ENCODE measurements at regions of chr12 and their contacts with region 1.

Region 1: DNA sequence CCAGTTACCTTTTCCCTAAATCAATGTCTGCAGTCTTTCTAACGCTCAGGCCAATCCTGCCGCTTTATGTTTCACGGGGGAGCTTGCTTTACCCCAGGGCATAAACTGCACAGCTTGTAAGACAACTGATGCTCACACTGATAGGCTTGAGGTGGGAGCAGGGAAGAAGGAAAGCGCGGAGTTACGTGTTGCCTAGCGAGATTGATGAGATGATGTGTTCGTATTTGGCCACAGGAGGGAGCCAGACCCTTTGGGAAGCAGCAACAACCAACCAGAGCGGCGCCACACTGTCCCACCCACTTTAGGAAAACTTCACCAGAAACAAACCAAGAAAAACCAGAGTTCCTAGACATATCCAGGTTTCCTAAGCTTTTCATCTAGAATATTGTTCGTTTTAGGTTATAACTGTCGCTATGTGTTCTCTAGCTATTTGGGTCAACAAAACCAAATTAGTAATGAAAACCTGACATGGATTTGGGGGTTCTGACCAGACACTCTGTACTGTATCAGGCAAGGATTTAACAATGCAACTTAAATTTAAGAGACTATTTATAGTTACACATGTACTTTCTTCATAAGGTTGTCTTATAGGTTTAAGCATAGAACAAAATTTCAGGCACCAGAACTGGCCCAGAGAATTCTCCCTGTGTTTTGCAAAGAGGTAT is 2.4 kb downstream of the IL26 start:
- DNase-seq: peak; percentile 29
- ATAC-seq: peak; percentile 99
- H3K4me3 Mint-ChIP-seq: peak overlapping the region; percentile 48
- H3K27ac Mint-ChIP-seq: no peak overlapping the region
- H3K4me1 Mint-ChIP-seq: peaks cover 5% of the 10 kb centered on the region
- H3K27me3 Mint-ChIP-seq: peaks cover 3% of the 10 kb centered on the region
- CTCF ChIP-seq: no peak

Region 2: GRCh38 chr12:67193704-67194103 is 1029.5 kb before region 1 on chr12:
- CTCF ChIA-PET with region 1: no interaction called
- POLR2A ChIA-PET with region 1: no interaction called
- intact Hi-C with region 1: no loop called
- DNase-seq: no peak
- ATAC-seq: no peak
- H3K4me3 Mint-ChIP-seq: no peak overlapping the region
- H3K27ac Mint-ChIP-seq: no peak overlapping the region
- H3K4me1 Mint-ChIP-seq: no peaks in the 10 kb centered on the region
- H3K27me3 Mint-ChIP-seq: peaks cover 3% of the 10 kb centered on the region
- CTCF ChIP-seq: no peak

Region 3: GRCh38 chr12:67355578-67356379 is 867.4 kb before region 1 on chr12:
- CTCF ChIA-PET with region 1: interaction called, 4 read pairs
- POLR2A ChIA-PET with region 1: no interaction called
- intact Hi-C with region 1: loop called (anchors 2 kb)
- DNase-seq: no peak
- ATAC-seq: peak; percentile 54
- H3K4me3 Mint-ChIP-seq: no peak overlapping the region
- H3K27ac Mint-ChIP-seq: no peak overlapping the region
- H3K4me1 Mint-ChIP-seq: peaks cover 5% of the 10 kb centered on the region
- H3K27me3 Mint-ChIP-seq: no peaks in the 10 kb centered on the region
- CTCF ChIP-seq: no peak

Region 4: GRCh38 chr12:68686595-68687521 is 463.6 kb after region 1 on chr12 and contains the start of gene NUP107:
- CTCF ChIA-PET with region 1: no interaction called
- POLR2A ChIA-PET with region 1: no interaction called
- intact Hi-C with region 1: loop called (anchors 1 kb)
- DNase-seq: peak; percentile 93
- ATAC-seq: peak; percentile 97
- H3K4me3 Mint-ChIP-seq: peak within 1 kb of the TSS; percentile 98
- H3K27ac Mint-ChIP-seq: peak within 1 kb of the TSS; percentile 97
- H3K4me1 Mint-ChIP-seq: peaks cover 33% of the 10 kb centered on the region
- H3K27me3 Mint-ChIP-seq: no peaks in the 10 kb centered on the region
- CTCF ChIP-seq: no peak
- total RNA-seq, gene NUP107: 75.0 and 90.8 TPM in 2 replicates

Measured in activated B cell treated with CpG ODN at 0.5 μM for 24 hours (primary cell).